PC-3 (cell line): ENCODE measurements at regions of chr12 and their contacts with region 1.

Region 1: GRCh38 chr12:50084775-50085614 is at the start of gene SMARCD1:
- DNase-seq: peak; percentile 92
- ATAC-seq: peak; percentile 77
- H3K4me3 ChIP-seq: peak within 1 kb of the TSS; percentile 78
- H3K27ac ChIP-seq: peak within 1 kb of the TSS; percentile 71
- H3K4me1 ChIP-seq: peaks cover 40% of the 10 kb centered on the region
- H3K27me3 ChIP-seq: no peaks in the 10 kb centered on the region
- CTCF ChIP-seq: peak; percentile 86
- total RNA-seq, gene SMARCD1: 105 and 109 TPM in 2 replicates

Region 2: DNA sequence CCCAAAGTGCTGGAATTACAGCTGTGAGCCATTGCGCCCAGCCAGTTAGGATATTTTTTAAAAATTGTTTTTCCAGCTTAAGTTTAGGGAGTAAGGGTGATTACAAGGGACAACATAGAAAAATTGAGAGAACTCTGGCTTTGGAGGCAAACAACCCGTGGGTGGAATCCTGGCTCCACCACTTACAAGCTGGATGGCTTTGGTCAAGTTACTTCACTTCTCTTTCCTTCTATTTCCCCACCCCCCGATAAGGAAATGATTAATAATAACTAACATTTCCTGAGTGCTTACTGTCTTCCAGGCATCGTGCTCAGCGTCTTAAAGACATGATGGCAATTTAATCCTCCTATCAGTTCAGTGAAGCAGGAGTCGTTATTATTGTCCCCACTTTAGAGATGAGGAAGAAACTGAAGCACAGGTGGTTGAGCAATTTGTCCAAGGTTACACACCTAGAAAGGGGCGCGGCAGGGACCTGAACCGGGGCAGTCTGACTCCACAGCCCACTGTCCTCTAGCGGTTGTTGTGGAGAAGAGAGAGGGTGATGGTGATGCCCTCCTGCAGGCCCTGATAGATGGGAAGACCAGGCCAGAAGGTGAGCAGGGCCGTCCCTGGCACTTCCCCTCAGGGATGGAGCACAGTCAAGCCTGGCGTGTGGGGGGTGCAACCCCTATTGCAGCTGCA is 164.6 kb before region 1 on chr12:
- CTCF ChIA-PET with region 1: no interaction called
- POLR2A ChIA-PET with region 1: no interaction called
- intact Hi-C with region 1: no loop called
- DNase-seq: peak; percentile 23
- ATAC-seq: peak; percentile 37
- H3K4me3 ChIP-seq: no peak overlapping the region
- H3K27ac ChIP-seq: no peak overlapping the region
- H3K4me1 ChIP-seq: peaks cover 5% of the 10 kb centered on the region
- H3K27me3 ChIP-seq: no peaks in the 10 kb centered on the region
- CTCF ChIP-seq: no peak

Region 3: DNA sequence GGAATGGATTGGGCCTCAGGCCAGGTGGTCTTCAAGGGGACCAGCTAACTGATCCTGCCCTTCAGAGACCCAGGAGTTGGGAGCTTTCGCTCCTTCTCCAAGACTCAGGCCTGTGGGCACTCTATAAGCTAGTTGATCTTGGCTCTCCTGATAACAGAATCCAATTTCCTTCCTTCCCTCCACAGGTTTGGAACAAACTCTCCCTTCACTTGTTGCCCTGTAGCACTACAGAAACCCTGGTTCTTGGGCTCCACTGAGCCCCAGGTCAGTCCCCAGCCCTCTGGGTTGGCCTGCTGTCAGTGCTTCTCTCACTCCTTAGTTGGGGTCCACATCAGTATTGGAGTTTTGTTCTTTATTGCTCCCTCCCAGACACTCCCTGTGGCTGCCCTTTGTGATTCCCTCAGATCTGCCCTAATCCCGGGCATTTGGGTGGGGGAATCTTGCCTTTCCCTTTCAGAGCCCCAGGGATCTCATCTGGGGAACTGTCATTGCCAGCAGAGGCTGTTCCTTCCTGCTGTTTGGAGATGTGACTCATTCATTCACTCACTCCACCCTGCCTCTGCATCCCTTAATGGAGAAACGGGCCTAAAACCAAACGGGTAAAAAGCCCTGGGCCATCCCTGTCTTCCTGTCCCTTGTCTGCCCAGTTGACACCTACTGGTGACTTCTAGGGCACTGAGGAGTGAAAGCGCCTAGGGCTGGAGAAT is 14.5 kb after region 1 on chr12:
- CTCF ChIA-PET with region 1: interaction called, 4 read pairs
- POLR2A ChIA-PET with region 1: interaction called, 20 read pairs
- intact Hi-C with region 1: no loop called
- DNase-seq: peak; percentile 50
- ATAC-seq: peak; percentile 76
- H3K4me3 ChIP-seq: no peak overlapping the region
- H3K27ac ChIP-seq: no peak overlapping the region
- H3K4me1 ChIP-seq: peaks cover 15% of the 10 kb centered on the region
- H3K27me3 ChIP-seq: no peaks in the 10 kb centered on the region
- CTCF ChIP-seq: no peak

Region 4: DNA sequence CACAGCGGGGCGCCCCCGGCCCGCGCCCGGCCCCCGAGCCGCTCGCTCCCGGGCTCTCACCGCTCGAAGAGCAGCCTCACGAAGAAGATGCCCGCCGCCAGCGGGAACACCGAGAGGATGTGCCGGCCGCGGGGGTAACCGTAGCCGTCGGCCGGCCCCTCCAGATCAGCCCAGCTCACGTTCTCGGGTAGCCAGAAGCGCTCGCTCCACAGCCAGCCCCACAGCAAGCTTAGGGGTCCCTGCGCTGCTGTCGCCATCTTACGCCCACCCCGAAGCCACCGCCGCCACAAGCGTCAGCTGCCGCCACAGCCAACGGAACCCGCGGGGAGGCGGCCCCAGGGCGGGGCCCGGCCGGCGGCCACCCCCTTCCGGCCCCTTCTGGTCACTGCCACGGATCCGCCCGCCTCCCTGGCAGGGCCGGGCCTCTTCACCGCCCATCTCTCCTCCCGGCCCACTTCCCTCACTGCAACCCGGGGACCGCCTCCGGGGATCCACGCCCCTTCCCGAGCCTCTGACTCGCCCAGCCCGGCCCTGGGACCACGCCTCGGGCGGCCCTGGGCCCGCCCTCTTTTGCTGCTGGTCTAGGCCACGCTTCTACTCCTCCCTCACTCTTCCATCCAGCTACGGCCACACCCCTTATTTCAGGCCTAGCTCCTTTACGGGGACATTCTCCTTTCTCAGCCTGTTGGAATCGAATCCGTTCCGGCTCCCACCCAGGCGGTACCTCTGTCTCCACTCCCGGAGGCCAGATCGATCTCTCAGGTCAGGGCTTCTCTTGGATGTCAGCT is 82.2 kb after region 1 on chr12 and contains the start of gene CERS5:
- CTCF ChIA-PET with region 1: interaction called, 4 read pairs
- POLR2A ChIA-PET with region 1: no interaction called
- intact Hi-C with region 1: loop called (anchors 1 kb)
- DNase-seq: peak; percentile 99
- ATAC-seq: peak; percentile 98
- H3K4me3 ChIP-seq: peak within 1 kb of the TSS; percentile 95
- H3K27ac ChIP-seq: peak within 1 kb of the TSS; percentile 20; the same call in 1 of the 2 replicates
- H3K4me1 ChIP-seq: peaks cover 8% of the 10 kb centered on the region
- H3K27me3 ChIP-seq: no peaks in the 10 kb centered on the region
- CTCF ChIP-seq: no peak
- total RNA-seq, gene CERS5: 24.9 and 29.7 TPM in 2 replicates

Region 5: DNA sequence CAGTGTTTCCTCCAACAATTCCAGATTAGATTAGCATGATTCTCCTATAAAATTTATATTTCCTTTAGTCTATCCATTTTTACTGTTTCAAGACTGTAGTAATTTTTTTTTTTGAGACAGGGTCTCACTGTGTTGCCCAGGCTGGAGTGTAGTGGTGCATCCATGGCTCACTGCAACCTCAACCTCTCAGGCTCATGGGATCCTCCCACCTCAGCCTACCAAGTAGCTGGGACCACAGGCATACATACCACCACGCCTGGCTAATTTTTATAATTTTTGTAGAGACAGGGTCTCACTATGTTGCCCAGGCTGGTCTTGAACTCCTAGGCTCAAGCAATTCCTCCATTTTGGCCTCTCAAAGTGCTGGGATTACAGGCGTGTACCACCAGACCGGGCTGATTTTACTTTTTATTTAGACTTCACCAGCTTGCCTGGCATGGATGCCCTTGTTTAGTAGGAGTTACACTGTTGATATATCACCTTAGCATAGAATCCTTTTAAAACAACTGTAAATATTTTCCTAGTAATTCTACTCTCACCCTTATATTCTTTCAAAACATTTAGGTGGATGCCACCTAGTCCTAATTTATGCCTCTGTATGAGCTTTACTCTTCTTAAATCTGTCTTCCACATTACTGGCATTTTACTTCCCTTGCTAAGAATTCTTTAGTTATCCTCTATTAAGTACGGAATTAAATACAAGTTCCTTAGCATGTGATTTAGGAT is 254.1 kb after region 1 on chr12:
- CTCF ChIA-PET with region 1: no interaction called
- POLR2A ChIA-PET with region 1: no interaction called
- intact Hi-C with region 1: no loop called
- DNase-seq: no peak
- ATAC-seq: no peak
- H3K4me3 ChIP-seq: no peak overlapping the region
- H3K27ac ChIP-seq: no peak overlapping the region
- H3K4me1 ChIP-seq: no peaks in the 10 kb centered on the region
- H3K27me3 ChIP-seq: no peaks in the 10 kb centered on the region
- CTCF ChIP-seq: no peak